Transverse colon (tissue), 4 donors: ENCODE measurements at regions of chr13 and their contacts with region 1.

Region 1: GRCh38 chr13:36251526-36251925 is 37.2 kb upstream of the SOHLH2 start:
- DNase-seq: no peak
- H3K4me3 ChIP-seq: no peak overlapping the region
- H3K27ac ChIP-seq: no peak overlapping the region
- H3K4me1 ChIP-seq: no peaks in the 10 kb centered on the region
- H3K27me3 ChIP-seq: no peaks in the 10 kb centered on the region
- CTCF ChIP-seq: no peak
- EP300 ChIP-seq: no peak
- POLR2A ChIP-seq: no peak

Region 2: GRCh38 chr13:35978603-35979316 is 272.8 kb before region 1 on chr13:
- in situ Hi-C with region 1: loop called in 1 of 4 experiments (anchors 25 kb)
- intact Hi-C with region 1: no loop called
- DNase-seq: no peak
- H3K4me3 ChIP-seq: no peak overlapping the region
- H3K27ac ChIP-seq: peak overlapping the region; percentile 49 to 76 (median 60)
- H3K4me1 ChIP-seq: no peaks in the 10 kb centered on the region
- H3K27me3 ChIP-seq: no peaks in the 10 kb centered on the region
- CTCF ChIP-seq: peak; percentile 73 to 82 (median 77)
- EP300 ChIP-seq: no peak
- POLR2A ChIP-seq: no peak